ENCODE measurements at regions of chr10 and their contacts with region 1.

Region 1: DNA sequence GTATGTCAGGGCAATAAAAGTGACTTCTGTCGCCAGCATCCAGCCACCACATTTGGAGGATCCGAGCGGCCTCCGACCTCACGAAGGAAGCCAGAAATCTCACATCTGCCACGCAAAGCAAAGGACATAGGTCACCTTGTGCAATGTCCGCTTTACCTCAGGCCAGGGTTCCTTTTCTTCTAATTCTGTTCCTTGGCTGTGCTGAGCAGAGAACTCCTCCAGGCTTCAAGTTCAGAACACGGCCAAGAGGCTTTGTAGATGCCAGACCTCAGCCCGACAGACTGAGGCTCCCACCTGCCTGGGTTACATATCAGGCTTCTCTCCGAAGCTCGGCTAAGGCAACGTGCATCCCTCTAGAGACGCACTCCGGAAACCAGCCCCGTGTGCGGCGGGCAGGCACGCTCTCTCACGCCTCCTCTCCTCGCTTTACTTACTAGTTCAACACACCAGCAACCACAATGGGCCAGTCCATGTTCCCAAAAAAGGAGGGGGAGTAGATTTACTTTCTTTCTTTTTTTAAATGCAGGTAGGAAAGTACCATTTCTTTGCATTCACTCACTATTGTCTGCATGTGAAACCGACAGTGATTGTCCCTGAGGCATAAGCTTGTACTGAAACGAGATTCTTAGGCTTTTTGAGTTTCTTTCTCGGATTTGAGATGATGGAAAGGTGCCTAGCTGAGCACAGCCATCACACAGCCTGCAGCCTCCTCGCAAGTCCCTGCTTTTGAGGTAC is 122.4 kb upstream of the AFAP1L2 start:
- DNase-seq: peak; percentile 84 to 97 (median 88)
- ATAC-seq: peak; percentile 88
- H3K4me3 ChIP-seq: peak overlapping the region; percentile 73
- H3K4me3 Mint-ChIP-seq: peak overlapping the region; percentile 99
- H3K27ac ChIP-seq: peak overlapping the region; percentile 71 to 95
- H3K27ac Mint-ChIP-seq: peak overlapping the region; percentile 96
- H3K4me1 ChIP-seq: peaks cover 57% of the 10 kb centered on the region
- H3K4me1 Mint-ChIP-seq: peaks cover 73% of the 10 kb centered on the region
- H3K27me3 ChIP-seq: no peaks in the 10 kb centered on the region
- H3K27me3 Mint-ChIP-seq: no peaks in the 10 kb centered on the region
- CTCF ChIP-seq: no peak

Region 2: GRCh38 chr10:114470956-114471905 is 55.4 kb before region 1 on chr10:
- CTCF ChIA-PET with region 1: interaction called, 19 read pairs
- POLR2A ChIA-PET with region 1: interaction called, 13 read pairs
- intact Hi-C with region 1: no loop called
- DNase-seq: peak; percentile 45 to 87 (median 56)
- ATAC-seq: peak; percentile 84
- H3K4me3 ChIP-seq: no peak overlapping the region
- H3K4me3 Mint-ChIP-seq: peak overlapping the region; percentile 25
- H3K27ac ChIP-seq: peak overlapping the region; percentile 2 to 31
- H3K27ac Mint-ChIP-seq: peak overlapping the region; percentile 54
- H3K4me1 ChIP-seq: peaks cover 16% of the 10 kb centered on the region
- H3K4me1 Mint-ChIP-seq: peaks cover 52% of the 10 kb centered on the region
- H3K27me3 ChIP-seq: no peaks in the 10 kb centered on the region
- H3K27me3 Mint-ChIP-seq: no peaks in the 10 kb centered on the region
- CTCF ChIP-seq: peak; percentile 95

Region 3: DNA sequence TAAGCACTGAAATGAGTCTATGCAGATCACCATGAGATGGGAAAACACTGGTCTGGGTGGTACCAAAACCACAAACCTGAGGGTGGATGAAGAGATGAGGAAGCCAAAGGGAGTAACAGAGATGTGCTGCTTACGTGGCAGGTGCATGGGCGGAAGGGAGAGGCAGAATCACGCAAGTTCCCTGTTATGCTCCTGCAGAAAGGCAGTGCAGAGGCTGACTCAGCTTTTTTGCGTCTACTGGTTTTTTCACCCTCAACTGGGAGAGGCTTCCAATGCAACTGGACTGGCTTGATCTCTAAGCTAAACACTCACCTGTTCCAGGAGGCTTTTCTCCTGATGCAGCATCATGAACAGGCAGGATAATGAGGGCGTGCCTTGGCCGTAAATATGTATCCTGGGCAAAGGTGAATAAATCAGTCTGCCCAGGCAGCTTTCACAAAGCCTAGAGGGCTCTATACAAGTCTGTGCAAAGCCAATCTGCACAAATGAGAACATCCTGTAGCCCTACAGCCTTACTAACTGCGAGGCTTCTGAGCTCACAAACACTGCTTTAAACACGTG is 27.0 kb before region 1 on chr10:
- CTCF ChIA-PET with region 1: interaction called, 3 read pairs
- POLR2A ChIA-PET with region 1: interaction called, 66 read pairs
- intact Hi-C with region 1: loop called in 1 of 2 experiments (anchors 2 kb)
- DNase-seq: peak in 11 of 14 experiments; percentile 24 to 75 (median 57)
- ATAC-seq: peak; percentile 61
- H3K4me3 ChIP-seq: peak overlapping the region; percentile 5
- H3K4me3 Mint-ChIP-seq: peak overlapping the region; percentile 72
- H3K27ac ChIP-seq: peak overlapping the region; percentile 64 to 66
- H3K27ac Mint-ChIP-seq: peak overlapping the region; percentile 66
- H3K4me1 ChIP-seq: peaks cover 68% of the 10 kb centered on the region
- H3K4me1 Mint-ChIP-seq: peaks cover 96% of the 10 kb centered on the region
- H3K27me3 ChIP-seq: no peaks in the 10 kb centered on the region
- H3K27me3 Mint-ChIP-seq: no peaks in the 10 kb centered on the region
- CTCF ChIP-seq: no peak

Region 4: GRCh38 chr10:114515298-114515914 is 11.3 kb before region 1 on chr10:
- CTCF ChIA-PET with region 1: interaction called, 10 read pairs
- POLR2A ChIA-PET with region 1: interaction called, 130 read pairs
- intact Hi-C with region 1: loop called in 1 of 2 experiments (anchors 1 kb)
- DNase-seq: no peak
- ATAC-seq: peak; percentile 12
- H3K4me3 ChIP-seq: no peak overlapping the region
- H3K4me3 Mint-ChIP-seq: peak overlapping the region; percentile 57
- H3K27ac ChIP-seq: peak overlapping the region in 1 of 2 donors; percentile 16
- H3K27ac Mint-ChIP-seq: peak overlapping the region; percentile 96
- H3K4me1 ChIP-seq: peaks cover 71% of the 10 kb centered on the region
- H3K4me1 Mint-ChIP-seq: peaks cover 98% of the 10 kb centered on the region
- H3K27me3 ChIP-seq: no peaks in the 10 kb centered on the region
- H3K27me3 Mint-ChIP-seq: no peaks in the 10 kb centered on the region
- CTCF ChIP-seq: no peak

Region 5: GRCh38 chr10:114821293-114821914 is 294.7 kb after region 1 on chr10 and contains the start of gene FHIP2A:
- CTCF ChIA-PET with region 1: interaction called, 7 read pairs
- POLR2A ChIA-PET with region 1: interaction called, 13 read pairs
- intact Hi-C with region 1: no loop called
- DNase-seq: peak; percentile 61 to 93 (median 82)
- ATAC-seq: peak; percentile 92
- H3K4me3 ChIP-seq: peak within 1 kb of the TSS; percentile 66
- H3K4me3 Mint-ChIP-seq: peak within 1 kb of the TSS; percentile 94
- H3K27ac ChIP-seq: peak within 1 kb of the TSS; percentile 49 to 57
- H3K27ac Mint-ChIP-seq: peak within 1 kb of the TSS; percentile 92
- H3K4me1 ChIP-seq: peaks cover 15% of the 10 kb centered on the region
- H3K4me1 Mint-ChIP-seq: peaks cover 41% of the 10 kb centered on the region
- H3K27me3 ChIP-seq: no peaks in the 10 kb centered on the region
- H3K27me3 Mint-ChIP-seq: no peaks in the 10 kb centered on the region
- CTCF ChIP-seq: peak; percentile 25
- total RNA-seq, gene FHIP2A: 52.8 to 53.7 TPM

Measured in CD4-positive, alpha-beta T cell (primary cell).